Activated naive CD4-positive, alpha-beta T cell treated with anti-CD3 and anti-CD28 coated beads for 36 hours (primary cell): ENCODE measurements at regions of chr1 and their contacts with region 1.

Region 1: DNA sequence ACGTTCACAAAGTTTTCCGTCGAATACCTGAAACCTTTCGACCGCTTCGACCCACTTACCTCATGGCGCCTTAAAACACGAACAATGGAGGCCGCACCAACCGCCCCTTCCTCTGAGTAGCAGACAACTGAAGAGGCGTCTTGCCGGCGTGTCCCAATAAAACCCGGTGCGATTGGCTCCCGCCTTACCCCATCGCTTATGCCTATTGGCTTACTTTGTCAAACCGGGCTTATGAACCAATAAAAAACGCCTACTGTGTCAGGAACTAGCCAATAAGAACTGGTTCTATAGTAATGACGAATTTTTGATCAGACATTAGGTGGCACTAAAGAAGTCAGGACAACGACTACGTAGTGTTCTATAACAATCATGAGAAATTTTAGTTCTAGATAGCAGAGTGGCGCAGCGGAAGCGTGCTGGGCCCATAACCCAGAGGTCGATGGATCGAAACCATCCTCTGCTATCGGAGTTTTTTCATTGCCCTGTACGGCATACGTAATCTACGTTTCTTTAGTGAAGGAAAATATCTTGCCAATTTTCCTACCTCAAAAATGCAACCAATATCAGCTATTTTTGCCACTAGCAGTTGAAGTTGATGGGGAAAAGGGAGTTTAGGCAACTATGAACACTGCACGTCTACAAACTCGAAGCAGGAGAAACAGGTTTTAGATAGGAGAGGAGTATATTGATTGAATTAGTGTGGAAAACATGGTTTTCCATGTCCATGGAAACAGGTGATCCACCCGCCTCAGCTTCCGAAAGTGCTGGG is at the start of gene ILF2:
- DNase-seq: peak; percentile 99
- H3K4me3 Mint-ChIP-seq: no peak within 1 kb of the TSS
- H3K27ac Mint-ChIP-seq: no peak within 1 kb of the TSS
- H3K4me1 Mint-ChIP-seq: peaks cover 36% of the 10 kb centered on the region
- H3K27me3 Mint-ChIP-seq: no peaks in the 10 kb centered on the region
- total RNA-seq, gene ILF2: 346 to 357 TPM

Region 2: DNA sequence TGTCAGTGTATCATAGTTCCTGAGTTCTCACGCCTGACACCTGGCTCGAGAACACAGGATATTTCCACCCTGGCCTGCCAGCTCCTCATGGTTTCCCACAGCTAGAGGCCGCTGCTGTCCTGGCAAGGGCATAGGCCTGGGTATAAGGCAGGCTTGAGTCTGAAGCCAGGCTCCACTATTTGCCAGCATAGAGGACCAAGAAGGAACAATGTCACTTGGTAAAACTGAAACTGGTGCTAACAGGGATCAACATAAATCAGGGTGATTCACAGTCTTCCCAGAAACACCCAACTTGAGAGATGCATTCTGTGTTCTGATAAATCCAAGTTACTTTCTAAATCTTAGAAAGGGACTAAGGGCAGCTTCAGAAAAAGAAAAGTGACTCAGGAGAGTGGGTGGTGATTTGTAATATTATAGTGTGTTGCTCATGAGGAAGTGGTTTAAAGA is 98.5 kb before region 1 on chr1:
- CTCF ChIA-PET with region 1: interaction called, 10 read pairs
- intact Hi-C with region 1: loop called (anchors 1 kb)
- DNase-seq: peak; percentile 85
- H3K4me3 Mint-ChIP-seq: no peak overlapping the region
- H3K27ac Mint-ChIP-seq: peak overlapping the region; percentile 18
- H3K4me1 Mint-ChIP-seq: peaks cover 40% of the 10 kb centered on the region
- H3K27me3 Mint-ChIP-seq: peaks cover 1% of the 10 kb centered on the region

Region 3: DNA sequence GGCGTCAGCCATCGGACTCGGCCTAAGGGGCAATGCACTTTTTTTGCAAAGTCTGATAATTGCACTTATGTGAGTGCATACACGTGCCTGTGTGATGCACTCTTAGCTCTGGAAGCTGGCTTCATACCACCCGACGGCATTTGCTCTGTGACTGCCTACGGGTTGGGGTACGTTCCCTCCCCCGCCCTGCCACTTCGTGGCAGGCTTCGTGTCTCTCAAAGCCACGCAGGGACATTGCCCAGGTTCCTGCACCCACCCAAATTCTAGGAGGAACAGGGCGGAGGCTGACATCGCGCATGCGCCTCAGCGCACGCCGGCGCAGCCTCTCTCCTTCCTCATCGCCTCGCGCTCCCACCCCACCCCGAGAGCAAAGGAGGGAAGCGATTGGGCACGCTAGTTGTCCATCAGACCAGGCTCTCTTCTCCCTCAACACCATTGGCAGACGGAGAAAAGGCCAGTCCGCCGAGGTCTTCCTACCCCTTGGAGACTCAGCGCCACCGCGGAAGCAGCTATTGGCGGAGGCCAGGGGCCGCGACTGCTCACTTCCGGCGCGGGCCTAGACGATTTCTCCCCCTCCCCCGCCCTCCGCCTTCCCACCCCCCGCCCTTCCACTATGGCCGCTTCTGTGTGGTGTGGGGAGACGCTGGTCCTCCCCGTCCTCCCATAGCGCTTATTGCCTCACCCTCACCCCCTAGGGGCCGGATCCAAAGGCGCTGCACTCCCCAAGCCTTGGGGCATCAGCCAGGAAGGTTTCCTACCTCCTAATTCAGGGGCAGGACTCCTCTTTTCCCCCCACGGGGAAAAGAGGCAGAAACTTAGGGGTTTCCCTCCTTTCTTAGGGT is 56.6 kb after region 1 on chr1 and contains the start of gene INTS3:
- CTCF ChIA-PET with region 1: interaction called, 3 read pairs
- intact Hi-C with region 1: loop called (anchors 1 kb)
- DNase-seq: peak; percentile 100
- H3K4me3 Mint-ChIP-seq: peak within 1 kb of the TSS; percentile 97
- H3K27ac Mint-ChIP-seq: peak within 1 kb of the TSS; percentile 95
- H3K4me1 Mint-ChIP-seq: peaks cover 39% of the 10 kb centered on the region
- H3K27me3 Mint-ChIP-seq: no peaks in the 10 kb centered on the region
- total RNA-seq, gene INTS3: 39.3 to 40.4 TPM

Region 4: GRCh38 chr1:153783233-153784190 is 112.5 kb after region 1 on chr1:
- CTCF ChIA-PET with region 1: no interaction called
- intact Hi-C with region 1: no loop called
- DNase-seq: peak; percentile 93
- H3K4me3 Mint-ChIP-seq: peak overlapping the region; percentile 95
- H3K27ac Mint-ChIP-seq: peak overlapping the region; percentile 92
- H3K4me1 Mint-ChIP-seq: peaks cover 5% of the 10 kb centered on the region
- H3K27me3 Mint-ChIP-seq: no peaks in the 10 kb centered on the region

Region 5: GRCh38 chr1:153967082-153968000 is 296.3 kb after region 1 on chr1 and contains the start of gene CREB3L4:
- CTCF ChIA-PET with region 1: no interaction called
- intact Hi-C with region 1: loop called (anchors 5 kb)
- DNase-seq: peak; percentile 90
- H3K4me3 Mint-ChIP-seq: peak within 1 kb of the TSS; percentile 85
- H3K27ac Mint-ChIP-seq: peak within 1 kb of the TSS; percentile 94
- H3K4me1 Mint-ChIP-seq: peaks cover 42% of the 10 kb centered on the region
- H3K27me3 Mint-ChIP-seq: no peaks in the 10 kb centered on the region
- total RNA-seq, gene CREB3L4: 5.6 to 7.4 TPM

Region 6: GRCh38 chr1:154183045-154183915 is 512.2 kb after region 1 on chr1:
- CTCF ChIA-PET with region 1: no interaction called
- intact Hi-C with region 1: loop called (anchors 1 kb)
- DNase-seq: peak; percentile 98
- H3K4me3 Mint-ChIP-seq: peak overlapping the region; percentile 100
- H3K27ac Mint-ChIP-seq: peak overlapping the region; percentile 99
- H3K4me1 Mint-ChIP-seq: peaks cover 38% of the 10 kb centered on the region
- H3K27me3 Mint-ChIP-seq: no peaks in the 10 kb centered on the region